ENCODE measurements at regions of chr12 and their contacts with region 1.

Region 1: GRCh38 chr12:57088459-57089248 is at the start of gene NAB2:
- DNase-seq: peak; percentile 79 to 91 (median 88)
- ATAC-seq: peak; percentile 84
- H3K4me3 ChIP-seq: peak within 1 kb of the TSS; percentile 94
- H3K4me3 Mint-ChIP-seq: peak within 1 kb of the TSS; percentile 94 to 98 (median 96)
- H3K27ac ChIP-seq: peak within 1 kb of the TSS; percentile 100
- H3K27ac Mint-ChIP-seq: peak within 1 kb of the TSS; percentile 94 to 99 (median 97)
- H3K4me1 ChIP-seq: peaks cover 23 to 46% of the 10 kb centered on the region in 2 donors
- H3K4me1 Mint-ChIP-seq: peaks cover 40 to 68% (median 58%) of the 10 kb centered on the region in 7 donors
- H3K27me3 ChIP-seq: no peaks in the 10 kb centered on the region
- H3K27me3 Mint-ChIP-seq: no peaks in the 10 kb centered on the region
- total RNA-seq, gene NAB2: 5.7 to 22.4 (median 15.5) TPM

Region 2: GRCh38 chr12:56127888-56128669 is 960.6 kb before region 1 on chr12 and contains the start of gene ESYT1:
- CTCF ChIA-PET with region 1: no interaction called
- POLR2A ChIA-PET with region 1: no interaction called
- intact Hi-C with region 1: loop called in 1 of 2 experiments (anchors 5 kb)
- DNase-seq: peak; percentile 75 to 100 (median 98)
- ATAC-seq: peak; percentile 94
- H3K4me3 ChIP-seq: peak within 1 kb of the TSS; percentile 77
- H3K4me3 Mint-ChIP-seq: peak within 1 kb of the TSS; percentile 95 to 100 (median 98)
- H3K27ac ChIP-seq: peak within 1 kb of the TSS; percentile 84
- H3K27ac Mint-ChIP-seq: peak within 1 kb of the TSS; percentile 86 to 99 (median 91)
- H3K4me1 ChIP-seq: peaks cover 39 to 54% of the 10 kb centered on the region in 2 donors
- H3K4me1 Mint-ChIP-seq: peaks cover 40 to 76% (median 65%) of the 10 kb centered on the region in 7 donors
- H3K27me3 ChIP-seq: no peaks in the 10 kb centered on the region
- H3K27me3 Mint-ChIP-seq: no peaks in the 10 kb centered on the region
- total RNA-seq, gene ESYT1: 121 to 300 (median 221) TPM

Region 3: GRCh38 chr12:56630160-56630632 is 458.5 kb before region 1 on chr12 and contains the start of gene BAZ2A:
- CTCF ChIA-PET with region 1: no interaction called
- POLR2A ChIA-PET with region 1: no interaction called
- intact Hi-C with region 1: loop called (anchors 1 to 5 kb)
- DNase-seq: peak; percentile 71 to 87 (median 82)
- ATAC-seq: peak; percentile 88
- H3K4me3 ChIP-seq: peak within 1 kb of the TSS; percentile 99
- H3K4me3 Mint-ChIP-seq: peak within 1 kb of the TSS; percentile 85 to 99 (median 91)
- H3K27ac ChIP-seq: peak within 1 kb of the TSS; percentile 99
- H3K27ac Mint-ChIP-seq: peak within 1 kb of the TSS; percentile 93 to 99 (median 95)
- H3K4me1 ChIP-seq: peaks cover 45 to 51% of the 10 kb centered on the region in 2 donors
- H3K4me1 Mint-ChIP-seq: peaks cover 55 to 86% (median 74%) of the 10 kb centered on the region in 7 donors
- H3K27me3 ChIP-seq: no peaks in the 10 kb centered on the region
- H3K27me3 Mint-ChIP-seq: no peaks in the 10 kb centered on the region
- total RNA-seq, gene BAZ2A: 127 to 230 (median 191) TPM

Region 4: GRCh38 chr12:56724972-56725722 is 363.5 kb before region 1 on chr12 and contains the start of gene NACA:
- CTCF ChIA-PET with region 1: no interaction called
- POLR2A ChIA-PET with region 1: no interaction called
- intact Hi-C with region 1: loop called (anchors 1 to 2 kb)
- DNase-seq: peak; percentile 85 to 99 (median 96)
- ATAC-seq: peak; percentile 95
- H3K4me3 ChIP-seq: peak within 1 kb of the TSS; percentile 100
- H3K4me3 Mint-ChIP-seq: peak within 1 kb of the TSS; percentile 94 to 100 (median 97)
- H3K27ac ChIP-seq: peak within 1 kb of the TSS; percentile 87
- H3K27ac Mint-ChIP-seq: peak within 1 kb of the TSS; percentile 94 to 100 (median 98)
- H3K4me1 ChIP-seq: peaks cover 40 to 43% of the 10 kb centered on the region in 2 donors
- H3K4me1 Mint-ChIP-seq: peaks cover 39 to 53% (median 49%) of the 10 kb centered on the region in 7 donors
- H3K27me3 ChIP-seq: no peaks in the 10 kb centered on the region
- H3K27me3 Mint-ChIP-seq: no peaks in the 10 kb centered on the region
- total RNA-seq, gene NACA: 834 to 1,486 (median 1,355) TPM

Region 5: DNA sequence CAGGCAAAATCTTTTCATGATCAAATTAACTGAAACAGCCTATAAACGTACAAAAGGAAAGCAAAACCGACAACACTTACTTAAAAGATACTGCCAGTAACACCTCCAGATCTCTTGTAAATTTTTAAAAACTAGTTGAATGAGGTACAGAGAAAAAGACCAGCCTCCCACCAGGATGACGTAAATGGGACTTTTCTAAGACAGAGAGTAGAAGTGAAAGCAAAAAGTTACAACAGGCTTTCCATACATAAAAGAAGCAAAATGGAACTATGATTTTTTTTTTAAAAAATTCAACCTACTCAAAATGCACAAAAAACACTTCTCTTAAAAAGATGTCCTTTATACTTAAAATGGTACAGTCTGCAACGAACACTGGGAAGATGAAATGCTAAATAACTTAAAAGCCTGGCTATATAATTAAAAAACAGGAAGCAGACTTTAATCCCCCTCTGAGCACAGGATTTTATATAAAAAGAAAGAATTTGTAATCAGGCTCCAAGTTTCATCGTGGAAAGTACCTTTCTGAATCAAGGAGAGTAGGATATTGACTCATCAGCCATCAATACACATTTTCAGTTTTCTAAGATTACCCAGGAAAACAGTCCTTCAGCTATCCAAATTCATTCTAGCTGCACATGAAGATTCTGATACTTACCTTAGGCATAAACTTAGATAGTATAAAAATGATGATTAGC is 24.5 kb before region 1 on chr12:
- CTCF ChIA-PET with region 1: interaction called, 44 read pairs
- POLR2A ChIA-PET with region 1: interaction called, 28 read pairs
- intact Hi-C with region 1: loop called (anchors 1 kb)
- DNase-seq: peak in 7 of 9 donors; percentile 67 to 90 (median 85)
- ATAC-seq: peak; percentile 97
- H3K4me3 ChIP-seq: peak overlapping the region; percentile 15
- H3K4me3 Mint-ChIP-seq: peak overlapping the region; percentile 13 to 90 (median 80)
- H3K27ac ChIP-seq: peak overlapping the region; percentile 76
- H3K27ac Mint-ChIP-seq: peak overlapping the region; percentile 79 to 97 (median 91)
- H3K4me1 ChIP-seq: peaks cover 17 to 20% of the 10 kb centered on the region in 2 donors
- H3K4me1 Mint-ChIP-seq: peaks cover 10 to 45% (median 34%) of the 10 kb centered on the region in 7 donors
- H3K27me3 ChIP-seq: no peaks in the 10 kb centered on the region
- H3K27me3 Mint-ChIP-seq: no peaks in the 10 kb centered on the region

Region 6: DNA sequence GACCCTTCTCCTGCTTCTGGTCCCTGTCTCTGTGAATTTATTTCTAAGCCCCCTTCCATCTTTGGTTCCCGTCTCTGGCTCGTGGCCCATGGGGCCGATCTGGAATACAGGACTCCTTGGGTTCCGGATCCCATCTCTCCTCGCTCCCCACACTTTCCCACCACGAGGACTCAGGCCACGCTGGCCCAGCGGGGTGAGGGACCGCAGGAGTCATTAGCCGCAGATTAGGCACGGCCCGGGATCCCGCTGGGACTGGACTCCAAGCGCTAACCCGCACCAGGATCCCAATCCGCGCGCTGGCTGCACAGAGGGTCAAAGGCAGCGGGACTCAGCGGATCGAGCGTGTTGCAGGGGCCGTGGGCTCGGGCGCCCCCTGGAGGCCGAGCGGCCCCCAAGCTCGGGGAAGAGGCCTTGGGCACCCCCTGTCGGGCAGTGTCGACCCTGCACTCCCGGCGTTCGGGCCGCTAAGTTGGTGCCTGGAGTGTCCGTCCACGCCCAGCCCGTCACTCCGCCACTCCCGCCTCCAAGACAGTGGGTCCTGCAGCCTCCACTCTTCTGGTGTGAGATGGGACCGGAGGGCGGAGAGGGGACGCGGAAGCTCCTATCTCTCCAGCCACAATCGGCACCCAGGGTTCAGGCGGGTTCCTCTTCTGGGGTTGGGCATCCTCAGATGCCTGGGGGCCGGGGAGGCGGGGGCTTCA is 150.3 kb after region 1 on chr12:
- CTCF ChIA-PET with region 1: no interaction called
- POLR2A ChIA-PET with region 1: no interaction called
- intact Hi-C with region 1: loop called in 1 of 2 experiments (anchors 5 kb)
- DNase-seq: peak; percentile 72 to 94 (median 85)
- ATAC-seq: peak; percentile 89
- H3K4me3 ChIP-seq: peak overlapping the region; percentile 80
- H3K4me3 Mint-ChIP-seq: peak overlapping the region; percentile 87 to 99 (median 95)
- H3K27ac ChIP-seq: no peak overlapping the region
- H3K27ac Mint-ChIP-seq: peak overlapping the region in 6 of 9 donors; percentile 24 to 83 (median 64)
- H3K4me1 ChIP-seq: peaks cover 45 to 70% of the 10 kb centered on the region in 2 donors
- H3K4me1 Mint-ChIP-seq: peaks cover 52 to 82% (median 66%) of the 10 kb centered on the region in 7 donors
- H3K27me3 ChIP-seq: peaks cover 7 to 18% of the 10 kb centered on the region in 2 donors
- H3K27me3 Mint-ChIP-seq: peaks cover 48 to 72% (median 55%) of the 10 kb centered on the region in 5 donors